PC-3 (cell line): ENCODE measurements at regions of chr22 and their contacts with region 1.

Region 1: GRCh38 chr22:45548991-45549745 is 46.5 kb downstream of the FBLN1 start:
- DNase-seq: peak; percentile 72
- ATAC-seq: peak; percentile 89
- H3K4me3 ChIP-seq: no peak overlapping the region
- H3K27ac ChIP-seq: peak overlapping the region; percentile 79
- H3K4me1 ChIP-seq: peaks cover 25% of the 10 kb centered on the region
- H3K27me3 ChIP-seq: no peaks in the 10 kb centered on the region
- CTCF ChIP-seq: peak; percentile 57

Region 2: GRCh38 chr22:45051419-45051818 is 497.7 kb before region 1 on chr22:
- CTCF ChIA-PET with region 1: no interaction called
- POLR2A ChIA-PET with region 1: no interaction called
- intact Hi-C with region 1: no loop called
- DNase-seq: no peak
- ATAC-seq: no peak
- H3K4me3 ChIP-seq: no peak overlapping the region
- H3K27ac ChIP-seq: no peak overlapping the region
- H3K4me1 ChIP-seq: no peaks in the 10 kb centered on the region
- H3K27me3 ChIP-seq: peaks cover 71% of the 10 kb centered on the region
- CTCF ChIP-seq: no peak

Region 3: DNA sequence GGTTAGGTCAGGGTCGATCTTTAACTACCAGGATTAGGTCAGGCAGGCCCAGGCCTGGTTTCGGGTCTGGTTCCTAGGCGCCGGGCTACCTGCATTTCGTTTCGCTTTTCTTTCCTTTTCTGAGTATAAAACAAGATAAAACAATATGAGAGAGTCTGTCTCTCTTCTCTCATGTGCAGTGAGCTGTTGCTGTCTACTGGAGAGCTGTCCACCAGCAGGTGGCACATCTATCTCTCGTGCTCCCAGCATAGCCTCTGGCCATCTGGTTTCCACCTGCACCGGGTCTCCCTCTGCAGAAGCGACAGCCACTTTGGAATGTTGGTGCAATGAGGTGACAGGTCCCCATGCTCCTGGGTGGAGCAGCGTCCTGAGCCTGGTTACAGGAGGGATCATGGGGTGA is 108.0 kb before region 1 on chr22:
- CTCF ChIA-PET with region 1: no interaction called
- POLR2A ChIA-PET with region 1: no interaction called
- intact Hi-C with region 1: loop called (anchors 1 kb)
- DNase-seq: peak; percentile 70
- ATAC-seq: peak; percentile 100
- H3K4me3 ChIP-seq: peak overlapping the region; percentile 55
- H3K27ac ChIP-seq: no peak overlapping the region
- H3K4me1 ChIP-seq: peaks cover 3% of the 10 kb centered on the region; the same call in 1 of the 2 replicates
- H3K27me3 ChIP-seq: no peaks in the 10 kb centered on the region
- CTCF ChIP-seq: peak; percentile 78

Region 4: GRCh38 chr22:45502215-45503049 is 46.7 kb before region 1 on chr22 and contains the start of gene FBLN1:
- CTCF ChIA-PET with region 1: no interaction called
- POLR2A ChIA-PET with region 1: no interaction called
- intact Hi-C with region 1: loop called (anchors 1 kb)
- DNase-seq: peak; percentile 34
- ATAC-seq: peak; percentile 86
- H3K4me3 ChIP-seq: peak within 1 kb of the TSS; percentile 74
- H3K27ac ChIP-seq: no peak within 1 kb of the TSS
- H3K4me1 ChIP-seq: no peaks in the 10 kb centered on the region; the same call in 1 of the 2 replicates
- H3K27me3 ChIP-seq: no peaks in the 10 kb centered on the region
- CTCF ChIP-seq: peak; percentile 29; the same call in 1 of the 2 replicates
- total RNA-seq, gene FBLN1: 13.4 and 17.4 TPM in 2 replicates

Region 5: GRCh38 chr22:45537734-45538181 is 11.4 kb before region 1 on chr22:
- CTCF ChIA-PET with region 1: no interaction called
- POLR2A ChIA-PET with region 1: interaction called, 12 read pairs
- intact Hi-C with region 1: no loop called
- DNase-seq: no peak
- ATAC-seq: no peak
- H3K4me3 ChIP-seq: no peak overlapping the region
- H3K27ac ChIP-seq: no peak overlapping the region
- H3K4me1 ChIP-seq: no peaks in the 10 kb centered on the region
- H3K27me3 ChIP-seq: no peaks in the 10 kb centered on the region
- CTCF ChIP-seq: no peak

Region 6: DNA sequence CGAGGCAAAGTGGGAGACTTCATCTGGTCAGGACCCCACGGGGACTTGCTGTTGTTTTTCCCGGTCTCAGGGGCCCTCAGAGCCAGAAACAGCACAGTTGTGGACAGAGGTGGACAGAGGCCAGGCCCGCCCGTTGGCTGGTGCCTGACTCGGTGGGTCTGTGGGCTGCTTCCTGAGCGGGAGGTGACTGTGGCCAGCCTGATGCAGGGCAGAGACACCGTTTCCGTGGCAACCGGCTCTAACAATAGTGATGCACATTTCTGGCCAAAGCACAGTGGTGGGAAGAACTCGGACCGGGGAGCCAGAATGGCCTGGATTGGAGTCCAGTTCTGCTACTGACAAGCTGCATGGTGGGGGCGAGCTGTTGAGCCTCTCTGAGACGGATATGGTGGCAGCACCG is 63.8 kb after region 1 on chr22:
- CTCF ChIA-PET with region 1: no interaction called
- POLR2A ChIA-PET with region 1: no interaction called
- intact Hi-C with region 1: no loop called
- DNase-seq: no peak
- ATAC-seq: no peak
- H3K4me3 ChIP-seq: peak overlapping the region; percentile 46
- H3K27ac ChIP-seq: peak overlapping the region; percentile 91
- H3K4me1 ChIP-seq: peaks cover 29% of the 10 kb centered on the region
- H3K27me3 ChIP-seq: no peaks in the 10 kb centered on the region
- CTCF ChIP-seq: no peak